Adrenal gland (tissue), 19 donors: ENCODE measurements at regions of chrX and their contacts with region 1.

Region 1: DNA sequence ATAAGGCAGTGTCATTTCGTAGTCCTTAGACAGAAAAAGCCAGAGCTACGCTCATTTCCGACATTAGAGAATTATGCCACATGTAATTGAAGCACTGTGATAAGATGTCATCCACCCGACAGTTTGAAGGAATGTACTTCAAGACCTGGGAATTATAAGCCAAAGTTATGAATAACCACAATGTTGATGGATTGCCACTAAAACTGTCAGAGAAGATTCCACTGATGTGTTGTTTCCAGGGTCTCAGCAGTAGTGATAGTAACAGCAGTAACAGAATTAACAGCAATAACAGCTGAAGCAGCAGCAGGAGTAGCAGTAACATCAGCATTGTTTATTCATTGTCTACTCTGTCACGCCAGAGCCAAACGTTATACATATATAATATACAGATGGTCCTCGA is 24.7 kb downstream of the RAB33A start:
- DNase-seq: no peak
- H3K4me3 ChIP-seq: no peak overlapping the region
- H3K27ac ChIP-seq: no peak overlapping the region
- H3K4me1 ChIP-seq: no peaks in the 10 kb centered on the region
- H3K27me3 ChIP-seq: no peaks in the 10 kb centered on the region
- CTCF ChIP-seq: no peak
- POLR2A ChIP-seq: no peak

Region 2: GRCh38 chrX:130079824-130080406 is 116.6 kb before region 1 on chrX:
- intact Hi-C with region 1: loop called (anchors 2 to 5 kb)
- DNase-seq: peak; percentile 52 to 85 (median 66)
- H3K4me3 ChIP-seq: no peak overlapping the region
- H3K27ac ChIP-seq: no peak overlapping the region
- H3K4me1 ChIP-seq: peaks cover 0 to 5% of the 10 kb centered on the region in 2 donors
- H3K27me3 ChIP-seq: no peaks in the 10 kb centered on the region
- CTCF ChIP-seq: peak; percentile 53 to 74 (median 66)
- POLR2A ChIP-seq: no peak

Region 3: DNA sequence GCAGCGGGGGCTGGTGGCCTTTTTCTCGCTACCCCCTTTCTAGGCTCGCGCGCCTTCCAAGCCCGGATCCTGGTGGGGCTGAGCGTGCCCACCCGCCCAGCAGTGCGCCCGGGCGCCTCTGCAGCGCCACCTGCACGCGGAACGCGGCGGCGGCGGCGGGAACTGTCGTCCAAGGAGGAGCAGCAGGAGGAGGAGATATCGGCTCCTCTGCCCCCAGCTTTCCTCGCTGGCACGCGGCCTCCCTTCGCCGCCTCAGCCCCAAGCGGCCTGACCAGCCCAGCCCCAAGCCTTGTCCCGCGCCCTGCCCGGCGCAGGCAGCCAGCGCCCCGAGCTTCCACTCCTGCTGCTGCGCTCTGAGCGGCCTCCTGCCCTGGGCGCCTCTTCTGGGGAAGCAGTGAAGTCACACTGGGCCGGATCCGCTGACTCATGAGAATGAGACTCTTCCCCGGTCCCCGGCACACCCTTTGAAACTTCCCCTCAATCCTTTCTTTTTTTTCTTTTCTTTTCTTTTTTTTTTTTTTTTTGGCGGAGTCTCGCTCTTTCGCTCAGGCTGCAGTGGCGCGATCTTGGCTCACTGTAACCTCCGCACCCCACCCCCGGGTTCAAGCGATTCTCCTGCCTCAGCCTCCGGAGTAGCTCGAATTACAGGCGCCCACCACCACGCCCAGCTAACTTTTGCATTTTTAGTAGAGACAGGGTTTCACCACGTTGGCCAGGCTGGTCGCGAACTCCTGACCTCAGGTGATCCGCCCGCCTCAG is 75.5 kb before region 1 on chrX:
- intact Hi-C with region 1: loop called in 1 of 2 experiments (anchors 10 kb)
- DNase-seq: peak; percentile 64 to 86 (median 82)
- H3K4me3 ChIP-seq: peak overlapping the region in 1 of 4 donors; percentile 42
- H3K27ac ChIP-seq: peak overlapping the region in 4 of 5 donors; percentile 32 to 86 (median 60)
- H3K4me1 ChIP-seq: no peaks in the 10 kb centered on the region
- H3K27me3 ChIP-seq: no peaks in the 10 kb centered on the region
- CTCF ChIP-seq: peak; percentile 36 to 70 (median 65)
- POLR2A ChIP-seq: peak in 1 of 2 donors; percentile 38

Region 4: GRCh38 chrX:130139474-130140201 is 56.8 kb before region 1 on chrX:
- intact Hi-C with region 1: no loop called
- DNase-seq: no peak
- H3K4me3 ChIP-seq: no peak overlapping the region
- H3K27ac ChIP-seq: no peak overlapping the region
- H3K4me1 ChIP-seq: no peaks in the 10 kb centered on the region
- H3K27me3 ChIP-seq: no peaks in the 10 kb centered on the region
- CTCF ChIP-seq: no peak
- POLR2A ChIP-seq: no peak